Right ventricle myocardium superior (tissue), 1 donor: ENCODE measurements at regions of chr15 and their contacts with region 1.

Region 1: DNA sequence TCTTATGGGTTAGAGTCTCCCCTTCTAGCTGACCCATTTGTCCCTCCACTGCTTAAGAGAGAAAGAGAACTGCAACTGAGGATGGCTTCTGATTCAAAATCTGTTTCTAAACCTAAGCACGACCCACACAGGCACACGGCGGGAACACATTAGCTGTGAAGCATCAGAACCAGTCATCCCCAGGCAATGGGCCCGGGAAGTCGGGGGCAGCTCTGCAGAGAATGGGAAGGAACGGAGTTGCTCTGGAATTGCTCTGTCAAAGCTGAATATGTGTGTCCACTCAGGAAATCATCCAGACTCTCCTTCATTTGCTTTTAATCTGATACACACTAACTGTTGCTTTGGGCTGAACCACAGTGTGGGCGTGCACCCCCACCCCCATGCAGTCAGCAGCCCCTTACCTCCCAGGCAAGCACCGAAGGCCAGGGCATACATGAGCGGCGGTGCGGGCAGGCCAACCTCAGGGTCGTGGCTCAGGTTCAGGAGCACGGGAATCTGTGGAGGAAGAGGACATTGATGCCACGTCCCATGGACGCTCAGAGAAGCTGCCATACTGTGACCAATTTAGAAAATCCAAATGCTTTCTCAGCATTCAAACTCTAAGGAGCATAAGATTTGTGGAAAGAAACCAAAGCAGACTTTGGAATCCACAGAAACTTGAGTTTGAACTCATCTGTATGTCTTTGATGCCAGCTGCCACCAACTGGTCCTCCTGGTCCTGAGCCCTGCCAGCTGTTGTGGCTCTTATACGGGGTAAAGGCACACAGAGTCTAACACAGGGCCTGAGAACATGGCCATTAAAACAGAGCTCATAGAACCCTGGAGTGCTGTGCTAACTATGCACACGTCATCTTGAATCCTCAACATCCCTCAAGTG is 247.9 kb downstream of the OCA2 start:
- DNase-seq: no peak
- ATAC-seq: no peak

Region 2: GRCh38 chr15:27463525-27464088 is 387.6 kb before region 1 on chr15:
- intact Hi-C with region 1: no loop called
- DNase-seq: no peak
- ATAC-seq: no peak

Region 3: DNA sequence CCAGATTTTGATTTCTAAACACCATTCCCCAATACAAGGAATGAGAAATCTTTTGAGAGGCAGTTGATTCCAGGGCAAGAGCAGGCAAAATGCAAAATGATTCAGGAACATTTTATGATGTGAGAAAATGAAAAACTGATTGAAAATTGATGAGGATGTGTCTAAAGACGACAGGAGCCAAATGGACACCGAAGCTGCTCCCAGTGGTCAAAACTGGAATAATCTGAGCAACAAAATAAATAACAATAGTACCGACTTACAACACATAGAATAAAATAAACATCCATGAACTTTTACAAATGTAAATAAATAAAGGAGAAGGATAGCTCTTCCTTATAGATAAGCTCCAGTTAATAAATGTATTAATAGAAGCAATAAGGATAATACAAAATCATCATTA is 61.1 kb after region 1 on chr15:
- intact Hi-C with region 1: loop called (anchors 10 kb)
- DNase-seq: no peak
- ATAC-seq: no peak